A549 (cell line): ENCODE measurements at regions of chr15 and their contacts with region 1.

Region 1: DNA sequence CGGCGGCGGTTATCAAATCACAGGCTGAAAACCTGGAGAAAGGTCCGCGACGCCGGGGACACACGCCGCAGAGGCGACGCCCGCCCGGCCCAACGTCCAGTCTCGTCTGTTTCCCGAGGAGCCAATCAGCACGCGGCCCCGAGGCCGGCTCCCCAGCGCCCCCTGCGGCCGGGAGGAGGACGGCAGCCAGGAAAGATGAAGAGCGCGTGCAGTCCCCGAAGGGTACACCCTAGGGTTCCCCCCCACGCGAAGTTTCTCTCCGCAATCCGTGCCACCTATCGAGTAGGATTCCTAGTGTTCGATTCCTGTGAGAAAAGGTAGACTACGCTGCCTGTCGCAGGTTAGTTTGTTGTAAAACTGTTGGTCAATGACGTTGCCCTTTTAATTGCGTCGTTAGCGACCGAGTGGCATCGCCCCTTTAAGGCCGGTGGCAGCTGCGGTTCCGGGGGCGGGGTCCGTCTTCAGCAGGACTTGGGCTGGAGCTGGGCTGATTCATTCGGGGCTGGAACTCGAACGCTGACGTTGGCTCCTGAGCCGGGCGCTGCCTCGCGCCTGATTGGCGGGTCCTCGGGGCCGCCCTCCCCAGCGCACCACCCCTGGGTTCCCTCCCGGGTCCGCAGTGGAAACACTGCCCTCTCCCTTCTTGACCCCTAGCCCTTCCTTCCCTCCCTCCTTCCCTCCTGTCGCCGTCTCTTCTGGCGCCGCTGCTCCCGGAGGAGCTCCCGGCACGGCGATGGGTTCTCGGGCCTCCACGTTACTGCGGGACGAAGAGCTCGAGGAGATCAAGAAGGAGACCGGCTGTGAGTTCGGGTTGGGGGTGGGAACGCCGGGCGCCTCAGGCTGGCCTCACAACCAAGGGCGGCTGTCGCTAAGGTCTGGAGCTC is at the starts of genes CHP1 and EXD1:
- DNase-seq: peak; percentile 88 to 97
- ATAC-seq: peak; percentile 98 to 99
- H3K4me3 ChIP-seq: peak within 1 kb of the TSS; percentile 83
- H3K27ac ChIP-seq: peak within 1 kb of the TSS; percentile 86 to 94
- H3K4me1 ChIP-seq: peaks cover 23% of the 10 kb centered on the region
- CTCF ChIP-seq: peak; percentile 78
- EP300 ChIP-seq: no peak
- POLR2A ChIP-seq: peak; percentile 37
- RAD21 ChIP-seq: peak; percentile 35 to 45; a peak in 4 of 5 replicates
- polyA plus RNA-seq, gene CHP1: 122 and 138 TPM in 2 replicates
- polyA plus RNA-seq, gene EXD1: 0.36 and 0.39 TPM in 2 replicates

Region 2: DNA sequence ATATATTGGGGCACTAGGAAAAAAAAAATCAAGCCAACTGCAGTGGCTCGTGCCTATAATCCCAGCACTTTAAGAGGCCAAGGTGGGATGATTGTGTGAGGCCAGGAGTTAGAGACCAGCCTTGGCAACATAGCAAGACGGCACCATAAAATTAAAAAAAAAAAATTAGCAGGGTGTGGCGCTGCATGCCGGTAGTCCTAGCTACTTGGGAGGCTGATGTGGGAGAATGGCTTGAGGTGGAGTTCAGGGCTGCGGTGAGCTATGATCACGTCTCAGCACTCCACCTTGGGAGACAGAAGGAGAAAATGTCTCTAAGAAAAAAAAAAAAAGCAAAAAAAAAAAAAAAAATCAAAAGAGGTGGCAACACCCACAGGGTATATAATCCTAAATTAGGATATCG is 164.4 kb before region 1 on chr15:
- CTCF ChIA-PET with region 1: no interaction called
- POLR2A ChIA-PET with region 1: no interaction called
- DNase-seq: no peak
- ATAC-seq: no peak
- H3K4me3 ChIP-seq: no peak overlapping the region
- H3K27ac ChIP-seq: no peak overlapping the region
- H3K4me1 ChIP-seq: no peaks in the 10 kb centered on the region
- CTCF ChIP-seq: no peak
- EP300 ChIP-seq: no peak
- POLR2A ChIP-seq: no peak
- RAD21 ChIP-seq: no peak

Region 3: DNA sequence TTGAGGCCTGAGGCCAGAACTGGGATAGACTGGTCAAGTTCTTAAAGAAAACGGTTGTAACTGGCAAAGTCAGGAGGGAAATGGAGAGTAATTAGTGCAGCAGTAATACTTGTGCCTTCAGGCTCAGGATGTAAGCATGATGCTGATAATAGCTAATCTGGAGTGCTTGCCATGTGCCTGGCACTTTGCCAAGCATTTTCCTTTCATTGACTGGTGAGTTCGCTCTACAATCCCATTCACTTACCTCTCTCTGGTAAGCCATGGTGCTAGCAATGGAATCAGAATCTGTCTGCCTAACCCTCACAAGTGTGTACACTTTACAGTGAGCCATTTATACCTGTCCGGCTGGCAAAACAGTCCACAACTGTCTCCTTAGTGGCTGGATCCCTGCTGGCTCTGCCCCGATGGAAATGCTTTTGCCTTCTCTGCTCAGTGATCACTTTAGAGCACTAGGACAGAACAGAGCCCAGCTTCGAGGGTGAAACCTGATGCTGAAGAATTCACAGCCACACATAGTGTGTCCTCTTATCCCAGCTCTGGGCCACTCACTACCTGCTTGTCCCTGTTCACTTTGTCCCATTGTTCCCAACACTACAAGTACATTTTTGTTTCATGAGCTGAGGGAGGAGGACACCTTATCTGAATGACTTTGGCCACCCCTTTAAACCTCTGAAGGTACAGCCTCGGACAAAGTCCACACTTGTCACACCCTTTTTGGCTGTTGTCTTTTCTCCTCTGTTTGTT is 10.5 kb after region 1 on chr15:
- CTCF ChIA-PET with region 1: interaction called, 15 read pairs
- POLR2A ChIA-PET with region 1: no interaction called
- DNase-seq: no peak
- ATAC-seq: no peak; a peak in 2 of 6 replicates
- H3K4me3 ChIP-seq: no peak overlapping the region
- H3K27ac ChIP-seq: peak overlapping the region; percentile 67 to 68; a peak in 5 of 6 replicates
- H3K4me1 ChIP-seq: peaks cover 24% of the 10 kb centered on the region
- CTCF ChIP-seq: no peak
- EP300 ChIP-seq: no peak
- POLR2A ChIP-seq: no peak
- RAD21 ChIP-seq: no peak

Region 4: DNA sequence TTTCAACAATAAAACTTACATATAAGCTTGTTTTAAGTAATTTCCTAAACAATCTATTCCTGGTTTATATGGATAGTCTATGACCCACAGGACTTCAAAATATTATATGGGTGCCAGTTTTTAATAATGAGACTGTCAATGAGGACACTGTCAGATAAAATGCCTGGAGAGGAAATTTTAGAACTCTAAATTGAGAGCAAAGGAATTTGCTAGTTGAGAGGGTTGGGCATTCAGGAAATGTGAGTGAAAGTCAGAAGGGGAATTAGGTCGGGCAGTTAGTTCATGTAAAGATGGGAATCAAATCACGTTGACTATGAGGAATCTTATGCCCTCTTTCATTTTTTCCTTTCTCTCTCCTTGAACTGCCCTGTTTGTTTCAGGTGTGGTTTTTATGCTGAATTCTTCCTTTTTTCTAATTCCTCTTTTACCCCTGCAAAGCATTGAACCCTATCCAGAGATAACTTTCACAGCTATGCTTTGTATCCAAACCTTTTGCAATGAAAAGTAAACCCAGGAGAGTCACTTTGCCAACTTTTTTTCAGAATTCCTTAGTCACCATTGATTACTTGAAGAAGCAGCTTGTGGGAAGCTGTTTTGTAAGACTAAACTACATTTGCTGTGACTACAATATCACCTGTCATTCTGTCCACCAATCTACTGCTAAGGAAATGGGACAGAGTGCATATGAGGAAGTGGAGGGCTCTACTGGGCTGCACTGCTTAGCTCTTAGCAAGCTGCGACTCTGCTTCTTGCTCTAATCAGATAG is 28.0 kb after region 1 on chr15:
- CTCF ChIA-PET with region 1: interaction called, 10 read pairs
- POLR2A ChIA-PET with region 1: interaction called, 7 read pairs
- DNase-seq: peak in 1 of 2 experiments; percentile 87
- ATAC-seq: peak; percentile 83 to 89
- H3K4me3 ChIP-seq: no peak overlapping the region
- H3K27ac ChIP-seq: peak overlapping the region; percentile 92 to 99
- H3K4me1 ChIP-seq: peaks cover 77% of the 10 kb centered on the region
- CTCF ChIP-seq: no peak
- EP300 ChIP-seq: peak; percentile 68 to 87; a peak in 3 of 5 replicates
- POLR2A ChIP-seq: no peak
- RAD21 ChIP-seq: no peak

Region 5: GRCh38 chr15:41683955-41684354 is 453.1 kb after region 1 on chr15:
- CTCF ChIA-PET with region 1: no interaction called
- POLR2A ChIA-PET with region 1: no interaction called
- DNase-seq: no peak
- ATAC-seq: no peak
- H3K4me3 ChIP-seq: no peak overlapping the region
- H3K27ac ChIP-seq: no peak overlapping the region
- H3K4me1 ChIP-seq: peaks cover 18% of the 10 kb centered on the region
- CTCF ChIP-seq: no peak
- EP300 ChIP-seq: no peak
- POLR2A ChIP-seq: no peak
- RAD21 ChIP-seq: no peak